OCI-LY7 (cell line): ENCODE measurements at regions of chr2 and their contacts with region 1.

Region 1: DNA sequence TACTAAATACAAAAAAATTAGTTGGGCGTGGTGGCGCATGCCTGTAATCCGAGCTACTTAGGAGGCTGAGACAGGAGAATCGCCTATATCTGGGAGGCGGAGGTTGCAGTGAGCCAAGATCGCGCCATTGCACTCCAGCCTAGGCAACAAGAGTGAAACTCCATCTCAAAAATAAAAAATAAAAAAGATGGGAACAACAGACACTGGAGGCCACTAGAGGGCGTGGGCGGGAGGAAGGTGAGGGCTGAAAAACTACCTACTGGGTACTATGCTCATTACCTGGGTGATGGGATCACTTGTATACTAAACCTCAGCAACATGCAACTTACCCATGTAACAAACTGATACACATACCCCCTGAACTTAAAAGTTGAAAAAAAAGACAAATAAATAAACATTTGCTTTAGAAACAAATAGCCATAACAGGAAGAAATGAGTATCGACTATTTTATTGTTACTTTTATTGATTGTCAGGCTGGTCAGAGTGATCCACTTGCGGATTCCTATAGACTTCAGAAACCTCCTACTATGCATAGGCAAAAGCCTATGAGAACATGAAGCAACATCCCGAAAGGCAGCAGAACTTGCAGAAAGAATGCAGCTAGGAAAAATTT is 61.1 kb downstream of the TMEM163 start:
- DNase-seq: peak; percentile 41
- H3K4me3 ChIP-seq: no peak overlapping the region
- H3K27ac ChIP-seq: no peak overlapping the region
- H3K4me1 ChIP-seq: no peaks in the 10 kb centered on the region
- CTCF ChIP-seq: peak; percentile 85

Region 2: DNA sequence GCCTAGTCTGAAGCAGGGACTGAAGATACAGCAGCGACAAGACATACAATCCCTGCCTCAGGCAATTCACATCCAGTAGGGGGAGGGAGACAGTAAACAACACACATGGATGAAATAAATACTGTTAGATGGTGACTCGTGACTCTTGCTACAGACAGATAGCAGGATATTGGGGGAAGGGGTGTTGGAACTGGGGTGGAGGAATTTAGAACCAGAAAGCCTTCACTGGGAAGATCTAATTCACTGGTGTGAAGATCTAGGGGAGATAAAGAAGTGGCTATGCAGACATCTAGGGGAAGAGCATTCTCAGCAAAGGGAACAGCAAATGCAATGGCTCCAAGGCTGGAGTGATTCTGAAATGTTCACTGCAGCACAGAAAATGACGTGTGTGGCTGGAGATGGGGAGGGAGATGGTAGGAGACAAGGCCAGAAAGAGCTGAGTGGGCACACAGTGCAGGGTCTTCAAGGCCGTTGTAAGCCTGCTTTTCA is 113.6 kb after region 1 on chr2:
- CTCF ChIA-PET with region 1: no interaction called
- POLR2A ChIA-PET with region 1: interaction called, 5 read pairs
- intact Hi-C with region 1: loop called (anchors 2 kb)
- DNase-seq: no peak
- H3K4me3 ChIP-seq: no peak overlapping the region
- H3K27ac ChIP-seq: no peak overlapping the region
- H3K4me1 ChIP-seq: no peaks in the 10 kb centered on the region
- CTCF ChIP-seq: no peak

Region 3: DNA sequence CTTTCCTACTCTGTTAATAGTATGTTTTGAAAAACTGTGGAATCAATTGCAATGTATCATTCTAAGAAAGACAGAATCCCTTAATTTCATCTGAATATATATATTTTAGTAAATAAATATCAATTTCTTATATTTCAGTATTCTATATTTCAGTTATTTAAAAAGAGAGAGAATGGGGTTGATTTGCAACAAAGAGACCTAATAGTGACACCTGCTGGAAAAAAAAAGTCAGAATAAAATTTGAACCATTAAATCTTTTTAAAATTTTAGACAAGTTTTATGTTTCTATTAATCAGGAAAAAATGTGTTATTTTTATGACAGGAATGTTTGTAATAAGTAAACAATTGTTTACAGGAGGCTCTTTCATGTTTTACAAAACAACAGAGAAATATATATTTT is 240.2 kb after region 1 on chr2:
- CTCF ChIA-PET with region 1: no interaction called
- POLR2A ChIA-PET with region 1: interaction called, 4 read pairs
- intact Hi-C with region 1: loop called (anchors 5 kb)
- DNase-seq: peak; percentile 26
- H3K4me3 ChIP-seq: no peak overlapping the region
- H3K27ac ChIP-seq: no peak overlapping the region
- H3K4me1 ChIP-seq: no peaks in the 10 kb centered on the region
- CTCF ChIP-seq: peak; percentile 80